Gastrocnemius medialis (tissue), 4 donors: ENCODE measurements at regions of chr11 and their contacts with region 1.

Region 1: GRCh38 chr11:34997952-34998528 is 81.6 kb downstream of the PDHX start:
- DNase-seq: no peak
- ATAC-seq: peak in 1 of 2 donors; percentile 50
- H3K4me3 ChIP-seq: no peak overlapping the region
- H3K27ac ChIP-seq: no peak overlapping the region
- H3K4me1 ChIP-seq: no peaks in the 10 kb centered on the region
- H3K27me3 ChIP-seq: no peaks in the 10 kb centered on the region
- CTCF ChIP-seq: peak; percentile 35 to 52 (median 37)
- POLR2A ChIP-seq: no peak

Region 2: DNA sequence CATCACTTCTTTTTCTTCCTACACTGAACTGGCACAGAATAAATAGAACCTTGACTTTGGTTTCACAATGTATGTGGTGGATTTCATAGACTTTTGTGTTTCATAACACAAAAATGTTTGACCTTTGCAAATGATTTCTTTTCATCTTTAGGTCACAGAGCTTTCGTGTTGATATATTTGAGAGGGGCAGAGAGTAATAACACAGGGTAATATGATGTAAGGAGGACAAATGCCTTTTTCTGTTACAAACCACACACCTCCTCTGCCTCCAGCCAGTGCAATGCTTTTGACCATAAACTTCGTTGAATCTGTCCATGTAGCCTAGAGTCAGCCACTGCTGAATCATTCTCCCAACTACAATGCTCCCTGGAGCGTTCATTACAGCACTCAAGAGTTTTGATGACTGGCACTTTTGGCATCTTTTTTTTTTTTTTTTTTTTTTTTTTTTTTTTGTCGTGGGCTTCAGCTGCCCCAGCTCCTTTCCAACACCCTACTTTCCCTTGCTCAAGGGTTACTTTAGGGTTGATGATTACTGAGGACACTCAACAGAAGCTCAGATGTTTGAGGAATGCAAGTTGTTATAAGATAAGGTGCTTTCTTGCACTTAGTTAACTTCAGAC is 570.7 kb before region 1 on chr11:
- in situ Hi-C with region 1: no loop called
- intact Hi-C with region 1: no loop called
- DNase-seq: no peak
- ATAC-seq: peak in 1 of 2 donors; percentile 44
- H3K4me3 ChIP-seq: no peak overlapping the region
- H3K27ac ChIP-seq: no peak overlapping the region
- H3K4me1 ChIP-seq: no peaks in the 10 kb centered on the region
- H3K27me3 ChIP-seq: no peaks in the 10 kb centered on the region
- CTCF ChIP-seq: no peak
- POLR2A ChIP-seq: no peak

Region 3: GRCh38 chr11:35138943-35139721 is 141.1 kb after region 1 on chr11 and contains the start of gene CD44:
- in situ Hi-C with region 1: loop called in 1 of 4 experiments (anchors 25 kb)
- intact Hi-C with region 1: no loop called
- DNase-seq: peak; percentile 35 to 57
- ATAC-seq: peak; percentile 59
- H3K4me3 ChIP-seq: peak within 1 kb of the TSS; percentile 74 to 85 (median 77)
- H3K27ac ChIP-seq: peak within 1 kb of the TSS; percentile 74 to 82 (median 78)
- H3K4me1 ChIP-seq: peaks cover 4 to 18% of the 10 kb centered on the region in 2 donors
- H3K27me3 ChIP-seq: peaks cover 0 to 7% (median 0%) of the 10 kb centered on the region in 3 donors
- CTCF ChIP-seq: no peak
- POLR2A ChIP-seq: peak in 1 of 2 donors; percentile 55
- total RNA-seq, gene CD44: 19.5 to 32.5 (median 29.2) TPM

Region 4: GRCh38 chr11:35237860-35238715 is 240.0 kb after region 1 on chr11:
- in situ Hi-C with region 1: no loop called
- intact Hi-C with region 1: loop called (anchors 10 kb)
- DNase-seq: peak; percentile 16 to 33
- ATAC-seq: peak in 1 of 2 donors; percentile 58
- H3K4me3 ChIP-seq: no peak overlapping the region
- H3K27ac ChIP-seq: no peak overlapping the region
- H3K4me1 ChIP-seq: peaks cover 0 to 3% of the 10 kb centered on the region in 2 donors
- H3K27me3 ChIP-seq: no peaks in the 10 kb centered on the region
- CTCF ChIP-seq: peak; percentile 61 to 84 (median 77)
- POLR2A ChIP-seq: no peak

Region 5: GRCh38 chr11:35391922-35392813 is 394.1 kb after region 1 on chr11:
- in situ Hi-C with region 1: loop called in 2 of 4 experiments (anchors 10 kb)
- intact Hi-C with region 1: loop called (anchors 5 kb)
- DNase-seq: peak; percentile 26 to 52
- ATAC-seq: peak; percentile 61 to 65
- H3K4me3 ChIP-seq: peak overlapping the region in 1 of 4 donors; percentile 29
- H3K27ac ChIP-seq: no peak overlapping the region
- H3K4me1 ChIP-seq: peaks cover 3 to 4% of the 10 kb centered on the region in 2 donors
- H3K27me3 ChIP-seq: no peaks in the 10 kb centered on the region
- CTCF ChIP-seq: peak; percentile 80 to 88 (median 83)
- POLR2A ChIP-seq: no peak

Region 6: DNA sequence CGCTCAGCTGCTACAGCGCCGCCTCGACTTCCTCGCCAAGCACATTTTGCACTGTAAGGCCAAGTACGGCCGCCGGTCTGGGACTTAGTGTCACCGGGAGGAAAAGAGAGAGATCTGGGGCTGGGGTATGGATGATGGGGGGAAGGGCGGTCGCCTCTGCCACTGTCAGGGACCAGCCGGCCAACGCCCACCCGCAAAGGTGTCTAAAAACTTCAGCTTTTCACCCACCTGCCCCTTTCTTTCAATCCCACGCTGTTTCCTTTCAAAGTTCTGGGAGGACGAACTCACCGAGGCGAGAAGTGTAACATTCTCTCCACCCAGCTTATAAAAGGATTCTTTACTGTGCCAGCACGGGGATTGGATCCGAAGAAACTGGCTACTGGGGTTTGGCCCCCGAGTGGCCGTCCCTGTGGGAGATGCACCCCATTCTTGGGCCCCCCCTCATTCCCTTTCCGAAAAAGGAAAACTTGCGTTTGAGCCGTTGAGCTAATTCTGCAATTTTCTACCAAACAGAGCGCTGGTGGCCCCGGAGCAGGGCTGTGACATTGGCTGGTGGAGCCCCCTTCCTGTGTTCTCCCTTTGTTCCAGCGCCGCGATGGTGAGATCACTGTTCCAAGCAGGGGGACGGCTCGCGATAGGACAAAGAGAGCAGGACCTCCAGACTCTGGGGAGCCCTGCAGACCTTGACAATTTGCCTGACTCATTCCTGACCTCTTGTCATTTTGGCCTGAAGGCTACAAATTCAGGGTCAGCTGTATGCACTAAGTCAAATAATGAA is 622.0 kb after region 1 on chr11:
- in situ Hi-C with region 1: no loop called
- intact Hi-C with region 1: no loop called
- DNase-seq: no peak
- ATAC-seq: no peak
- H3K4me3 ChIP-seq: peak overlapping the region; percentile 47 to 75 (median 64)
- H3K27ac ChIP-seq: no peak overlapping the region
- H3K4me1 ChIP-seq: peaks cover 9 to 22% of the 10 kb centered on the region in 2 donors
- H3K27me3 ChIP-seq: peaks cover 0 to 7% (median 2%) of the 10 kb centered on the region in 3 donors
- CTCF ChIP-seq: no peak
- POLR2A ChIP-seq: no peak